ENCODE measurements at regions of chr5 and their contacts with region 1.

Region 1: DNA sequence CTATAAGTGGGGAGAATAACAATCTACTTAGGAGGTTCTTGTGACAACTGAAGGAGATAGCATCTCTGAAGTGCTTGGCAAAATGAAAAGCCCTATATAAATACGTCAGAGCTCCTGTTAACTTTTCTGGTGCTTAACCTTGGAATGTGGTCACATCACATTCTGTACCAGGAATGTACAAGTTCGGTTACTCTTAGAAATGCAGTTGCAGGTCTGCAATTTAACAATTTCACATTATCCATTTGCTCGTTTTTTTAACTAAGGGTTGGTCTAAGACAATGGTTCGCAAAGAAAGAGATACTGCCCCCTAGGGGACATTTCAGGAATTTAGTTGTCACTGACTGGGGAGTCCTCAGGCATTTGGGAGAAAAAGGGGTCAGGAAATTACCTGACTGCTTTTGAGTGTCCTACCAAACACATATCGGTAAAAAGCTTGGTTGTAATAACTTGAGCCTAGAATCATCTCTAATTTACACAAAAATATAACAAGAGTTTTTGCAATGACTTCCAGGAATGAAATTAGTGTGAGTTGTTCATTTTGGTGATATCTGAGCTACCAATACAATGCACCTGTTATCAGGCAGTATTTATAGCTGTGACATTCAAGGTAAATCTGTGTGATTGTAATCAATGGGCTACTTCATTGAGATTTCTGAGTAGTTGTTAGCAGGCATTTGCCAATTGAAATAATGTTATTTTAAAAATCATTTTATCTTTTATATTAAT is 5.4 kb upstream of the HBEGF start:
- DNase-seq: peak; percentile 65
- ATAC-seq: peak; percentile 90
- H3K4me3 Mint-ChIP-seq: no peak overlapping the region
- H3K27ac Mint-ChIP-seq: no peak overlapping the region
- H3K4me1 Mint-ChIP-seq: peaks cover 7% of the 10 kb centered on the region
- H3K27me3 Mint-ChIP-seq: no peaks in the 10 kb centered on the region

Region 2: DNA sequence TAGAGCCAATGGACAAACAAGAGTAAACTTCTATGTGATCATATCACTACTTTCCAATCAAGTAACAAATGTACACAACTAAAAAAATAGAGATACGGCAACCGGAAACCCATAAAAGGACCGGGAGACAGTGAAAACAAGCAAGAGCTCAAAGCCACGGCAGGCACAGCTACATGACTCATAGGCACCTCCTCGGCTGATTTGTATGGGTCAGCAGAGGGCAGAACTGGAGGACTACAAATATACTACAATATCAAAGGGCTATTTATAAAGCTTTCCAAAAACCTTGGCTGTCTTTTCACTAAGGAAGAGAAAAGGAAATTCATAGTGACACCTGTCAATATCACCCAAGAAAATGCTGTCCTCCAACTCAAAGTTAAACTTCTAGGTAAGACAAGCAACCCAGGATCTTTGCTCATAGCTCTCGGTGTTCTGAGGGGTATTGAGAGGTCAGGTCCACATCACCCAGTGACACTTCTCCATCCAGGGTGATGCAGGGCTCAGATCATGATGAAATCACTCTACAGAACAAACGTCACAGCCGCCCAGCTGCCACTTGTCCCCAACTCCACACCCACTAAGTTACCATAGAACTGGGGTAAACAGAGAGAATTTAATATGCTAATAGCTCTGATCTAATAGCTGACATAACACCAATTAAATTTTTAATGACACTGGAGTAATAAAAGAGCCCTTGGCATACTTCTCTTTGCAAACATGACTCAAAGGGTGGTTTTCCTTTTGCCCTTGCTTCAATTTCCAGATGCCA is 90.2 kb before region 1 on chr5:
- CTCF ChIA-PET with region 1: interaction called, 10 read pairs
- POLR2A ChIA-PET with region 1: no interaction called
- intact Hi-C with region 1: no loop called
- DNase-seq: peak; percentile 41
- ATAC-seq: peak; percentile 79
- H3K4me3 Mint-ChIP-seq: no peak overlapping the region
- H3K27ac Mint-ChIP-seq: peak overlapping the region; percentile 8
- H3K4me1 Mint-ChIP-seq: peaks cover 58% of the 10 kb centered on the region
- H3K27me3 Mint-ChIP-seq: no peaks in the 10 kb centered on the region

Region 3: GRCh38 chr5:140336388-140336787 is 15.4 kb before region 1 on chr5:
- CTCF ChIA-PET with region 1: interaction called, 44 read pairs
- POLR2A ChIA-PET with region 1: no interaction called
- intact Hi-C with region 1: no loop called
- DNase-seq: no peak
- ATAC-seq: no peak
- H3K4me3 Mint-ChIP-seq: no peak overlapping the region
- H3K27ac Mint-ChIP-seq: no peak overlapping the region
- H3K4me1 Mint-ChIP-seq: peaks cover 13% of the 10 kb centered on the region
- H3K27me3 Mint-ChIP-seq: no peaks in the 10 kb centered on the region

Measured in activated CD4-positive, alpha-beta T cell treated with anti-CD3 and anti-CD28 coated beads for 36 hours (primary cell).